K562 (cell line): ENCODE measurements at regions of chr5 and their contacts with region 1.

Region 1: GRCh38 chr5:1325870-1326532 is 18.9 kb downstream of the CLPTM1L start:
- DNase-seq: no peak
- ATAC-seq: no peak
- H3K4me3 ChIP-seq: no peak overlapping the region
- H3K27ac ChIP-seq: no peak overlapping the region
- H3K4me1 ChIP-seq: peaks cover 0 to 21% of the 10 kb centered on the region in 2 experiments; a peak in 1 of 5 replicates
- H3K27me3 ChIP-seq: no peaks in the 10 kb centered on the region
- CTCF ChIP-seq: no peak
- EP300 ChIP-seq: no peak
- POLR2A ChIP-seq: no peak
- RAD21 ChIP-seq: no peak

Region 2: GRCh38 chr5:42243-42642 is 1283.8 kb before region 1 on chr5:
- CTCF ChIA-PET with region 1: no interaction called
- POLR2A ChIA-PET with region 1: no interaction called
- in situ Hi-C with region 1: no loop called
- intact Hi-C with region 1: no loop called
- DNase-seq: peak in 3 of 4 experiments; percentile 26 to 40 (median 28)
- ATAC-seq: peak; percentile 96
- H3K4me3 ChIP-seq: no peak overlapping the region
- H3K27ac ChIP-seq: no peak overlapping the region
- H3K4me1 ChIP-seq: no peaks in the 10 kb centered on the region
- H3K27me3 ChIP-seq: peaks cover 10 to 17% of the 10 kb centered on the region in 2 experiments; a peak in 4 of 5 replicates
- CTCF ChIP-seq: peak; percentile 61 to 66 (median 64)
- EP300 ChIP-seq: no peak
- POLR2A ChIP-seq: no peak
- RAD21 ChIP-seq: peak; percentile 40 to 72; a peak in 3 of 4 replicates

Region 3: GRCh38 chr5:1315709-1316587 is 10.1 kb before region 1 on chr5:
- CTCF ChIA-PET with region 1: no interaction called
- POLR2A ChIA-PET with region 1: interaction called, 32 read pairs
- in situ Hi-C with region 1: no loop called
- intact Hi-C with region 1: no loop called
- DNase-seq: peak; percentile 56 to 65 (median 58)
- ATAC-seq: peak; percentile 75
- H3K4me3 ChIP-seq: no peak overlapping the region
- H3K27ac ChIP-seq: no peak overlapping the region
- H3K4me1 ChIP-seq: peaks cover 13 to 47% of the 10 kb centered on the region in 2 experiments; a peak in 4 of 5 replicates
- H3K27me3 ChIP-seq: peaks cover 11 to 35% of the 10 kb centered on the region in 2 experiments; a peak in 3 of 5 replicates
- CTCF ChIP-seq: no peak
- EP300 ChIP-seq: no peak
- POLR2A ChIP-seq: no peak; the same call in 1 of the 2 replicates
- RAD21 ChIP-seq: no peak